ENCODE measurements at regions of chrX and their contacts with region 1.

Region 1: GRCh38 chrX:121322159-121322558 is 274.7 kb downstream of the GLUD2 start:
- DNase-seq: no peak
- H3K4me3 ChIP-seq: no peak overlapping the region
- H3K27ac ChIP-seq: no peak overlapping the region
- H3K4me1 ChIP-seq: no peaks in the 10 kb centered on the region
- H3K27me3 ChIP-seq: no peaks in the 10 kb centered on the region
- CTCF ChIP-seq: peak; percentile 58

Region 2: GRCh38 chrX:121254336-121254735 is 67.8 kb before region 1 on chrX:
- CTCF ChIA-PET with region 1: interaction called, 10 read pairs
- POLR2A ChIA-PET with region 1: no interaction called
- intact Hi-C with region 1: no loop called
- DNase-seq: peak; percentile 33
- H3K4me3 ChIP-seq: no peak overlapping the region
- H3K27ac ChIP-seq: no peak overlapping the region
- H3K4me1 ChIP-seq: no peaks in the 10 kb centered on the region
- H3K27me3 ChIP-seq: no peaks in the 10 kb centered on the region
- CTCF ChIP-seq: peak; percentile 51